ENCODE measurements at regions of chr1 and their contacts with region 1.

Region 1: DNA sequence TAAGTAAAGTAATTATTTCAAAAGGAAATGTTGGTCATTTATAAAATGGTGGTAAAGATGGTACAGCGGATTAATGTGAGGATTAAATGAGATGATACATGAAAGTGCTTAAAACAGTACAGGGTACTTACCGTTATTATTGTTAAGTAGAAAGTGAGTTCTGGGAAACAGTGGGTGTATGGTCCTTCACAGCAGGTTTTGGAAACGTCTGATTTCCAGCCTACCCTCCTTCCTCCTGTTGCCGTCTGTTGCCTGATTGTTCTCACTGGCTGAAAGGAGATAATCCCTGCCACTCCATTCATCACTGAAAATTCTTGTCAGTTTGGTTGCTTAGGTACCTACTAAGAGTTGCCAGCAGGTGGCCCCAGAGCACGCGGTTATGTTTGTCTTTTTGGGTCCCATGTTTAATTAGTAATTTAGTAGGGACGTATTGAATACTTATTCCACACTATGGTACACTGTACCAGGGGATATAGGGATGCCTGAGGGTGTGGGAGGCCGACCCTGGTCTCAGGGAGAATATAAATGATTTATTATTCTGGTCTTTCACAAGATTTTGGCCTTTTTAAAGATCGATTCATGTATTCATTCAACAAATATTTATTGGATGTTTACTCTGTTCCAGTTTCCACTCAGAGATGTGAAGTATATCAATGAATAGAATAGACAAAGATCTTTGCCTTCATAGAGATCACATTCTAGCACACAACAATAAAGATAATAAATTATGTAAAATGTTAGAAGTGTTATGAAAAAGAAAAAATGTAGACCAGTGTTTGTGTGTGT is 30.8 kb upstream of the RPTN start:
- DNase-seq: peak; percentile 66
- H3K4me3 ChIP-seq: peak overlapping the region in 1 of 2 donors; percentile 45
- H3K27ac ChIP-seq: peak overlapping the region; percentile 53 to 71
- H3K4me1 ChIP-seq: peaks cover 20% of the 10 kb centered on the region
- H3K27me3 ChIP-seq: no peaks in the 10 kb centered on the region
- CTCF ChIP-seq: peak; percentile 51 to 85 (median 80)
- POLR2A ChIP-seq: no peak

Region 2: DNA sequence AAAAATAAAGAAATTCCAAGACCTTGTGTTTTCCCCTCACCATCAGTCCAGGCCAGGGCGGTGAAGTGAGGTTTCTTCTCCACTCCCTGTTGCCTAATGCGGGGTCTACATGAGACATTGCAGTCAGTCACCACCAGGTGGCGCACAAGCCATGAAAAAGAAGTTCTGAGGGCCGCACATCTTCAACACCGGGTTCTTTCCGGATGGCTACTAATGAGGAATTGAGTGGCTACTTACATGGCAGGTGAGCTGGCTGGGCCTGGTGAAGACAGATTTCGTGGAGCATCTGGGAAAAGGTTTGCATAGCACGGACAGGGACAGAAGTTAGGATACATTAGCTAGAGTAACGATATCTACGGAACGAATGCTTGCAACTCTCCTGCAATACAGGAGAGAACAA is 137.2 kb before region 1 on chr1:
- intact Hi-C with region 1: loop called (anchors 5 kb)
- DNase-seq: peak; percentile 84
- H3K4me3 ChIP-seq: no peak overlapping the region
- H3K27ac ChIP-seq: no peak overlapping the region
- H3K4me1 ChIP-seq: peaks cover 6% of the 10 kb centered on the region
- H3K27me3 ChIP-seq: no peaks in the 10 kb centered on the region
- CTCF ChIP-seq: peak; percentile 84 to 96 (median 90)
- POLR2A ChIP-seq: no peak

Region 3: DNA sequence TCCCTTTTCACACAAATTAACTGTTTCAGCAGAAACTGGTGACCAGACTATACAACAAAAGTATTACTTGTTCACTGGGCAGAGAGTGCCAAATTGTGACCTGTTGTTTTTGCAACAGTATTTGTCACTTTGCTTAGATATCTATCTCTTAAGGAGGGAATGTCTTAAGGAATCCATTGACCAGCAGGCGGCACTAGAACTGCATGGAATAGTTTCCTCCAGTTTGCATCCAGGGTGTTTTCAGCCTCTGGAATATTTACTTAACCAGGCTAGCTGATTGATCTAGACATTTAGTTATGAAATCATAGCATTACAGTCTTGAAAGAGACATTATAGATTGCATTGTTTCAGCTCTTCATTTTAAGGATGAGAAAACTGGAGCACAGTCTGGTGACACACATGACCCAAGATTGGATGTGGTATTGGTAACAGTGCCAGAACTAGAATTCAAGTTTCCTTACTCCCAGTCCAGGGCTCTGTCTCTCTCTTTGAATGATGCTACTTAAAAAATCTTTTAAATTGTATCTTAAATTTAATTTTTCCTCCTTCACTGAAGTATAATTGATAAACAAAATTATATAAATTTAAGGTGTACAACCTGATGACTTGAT is 47.8 kb before region 1 on chr1:
- intact Hi-C with region 1: loop called (anchors 2 kb)
- DNase-seq: peak; percentile 75
- H3K4me3 ChIP-seq: no peak overlapping the region
- H3K27ac ChIP-seq: no peak overlapping the region
- H3K4me1 ChIP-seq: no peaks in the 10 kb centered on the region
- H3K27me3 ChIP-seq: no peaks in the 10 kb centered on the region
- CTCF ChIP-seq: peak; percentile 57 to 84 (median 74)
- POLR2A ChIP-seq: no peak

Region 4: GRCh38 chr1:152440635-152441471 is 251.0 kb after region 1 on chr1:
- intact Hi-C with region 1: loop called (anchors 5 kb)
- DNase-seq: peak; percentile 63
- H3K4me3 ChIP-seq: no peak overlapping the region
- H3K27ac ChIP-seq: no peak overlapping the region
- H3K4me1 ChIP-seq: no peaks in the 10 kb centered on the region
- H3K27me3 ChIP-seq: no peaks in the 10 kb centered on the region
- CTCF ChIP-seq: peak in 3 of 4 experiments; percentile 53 to 77 (median 65)
- POLR2A ChIP-seq: no peak

Region 5: DNA sequence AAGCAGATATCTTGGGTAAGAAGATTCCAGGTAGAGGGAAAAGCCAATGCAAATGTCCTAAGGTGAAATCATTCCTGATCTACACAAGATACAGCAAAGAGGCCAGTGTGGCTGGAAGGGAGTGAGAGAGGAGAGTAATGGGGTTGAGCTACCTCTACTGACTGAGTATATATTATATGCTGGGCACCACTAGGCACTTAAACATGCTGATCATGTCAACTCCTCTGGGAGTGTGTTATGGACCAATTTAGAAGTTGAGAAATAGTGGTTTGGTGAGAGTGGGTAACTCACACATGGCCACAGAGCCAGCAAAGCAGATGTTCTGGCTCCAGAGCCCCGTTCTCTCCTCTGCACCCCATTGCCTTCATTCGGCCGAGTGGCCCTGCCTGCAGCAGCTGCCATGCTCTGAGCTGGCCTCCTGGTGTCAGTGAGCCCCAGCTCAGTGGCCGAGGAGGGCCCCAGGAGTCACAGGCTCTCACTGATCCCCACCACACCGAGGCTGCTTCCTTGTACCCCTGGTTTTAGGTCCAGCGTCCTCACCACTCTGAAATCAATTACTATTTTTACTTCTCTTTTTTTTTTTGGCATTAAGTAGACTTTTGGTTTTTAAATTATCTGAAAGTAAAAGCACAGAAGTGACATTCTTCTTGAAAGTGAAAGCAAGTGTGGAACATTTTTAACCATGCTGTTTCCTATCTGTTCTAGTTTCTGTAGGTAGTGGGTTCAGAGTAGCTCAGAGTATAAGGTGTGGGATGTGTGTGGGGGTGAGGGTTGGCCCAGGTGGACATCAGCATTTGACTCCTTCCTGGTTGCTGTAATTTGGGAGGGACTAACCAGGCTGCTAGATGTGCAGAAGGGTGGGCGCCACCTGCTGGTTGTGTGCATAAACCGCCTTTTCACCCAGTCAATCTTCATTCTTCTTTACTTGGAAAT is 270.0 kb after region 1 on chr1:
- intact Hi-C with region 1: loop called (anchors 5 kb)
- DNase-seq: peak; percentile 31
- H3K4me3 ChIP-seq: no peak overlapping the region
- H3K27ac ChIP-seq: no peak overlapping the region
- H3K4me1 ChIP-seq: no peaks in the 10 kb centered on the region
- H3K27me3 ChIP-seq: no peaks in the 10 kb centered on the region
- CTCF ChIP-seq: peak in 3 of 4 experiments; percentile 31 to 63 (median 45)
- POLR2A ChIP-seq: no peak

Measured in prostate gland (tissue), 2 donors.